GM12878 (cell line): ENCODE measurements at regions of chr4 and their contacts with region 1.

Region 1: GRCh38 chr4:176377780-176378179 is 58.0 kb downstream of the SPCS3 start:
- DNase-seq: no peak
- ATAC-seq: peak; percentile 86
- H3K4me3 ChIP-seq: no peak overlapping the region
- H3K27ac ChIP-seq: no peak overlapping the region
- H3K4me1 ChIP-seq: no peaks in the 10 kb centered on the region
- H3K27me3 ChIP-seq: no peaks in the 10 kb centered on the region
- CTCF ChIP-seq: peak; percentile 38 to 69 (median 61); a peak in 5 of 6 replicates
- EP300 ChIP-seq: no peak
- POLR2A ChIP-seq: no peak
- RAD21 ChIP-seq: peak; percentile 87

Region 2: GRCh38 chr4:176259330-176260090 is 118.3 kb before region 1 on chr4:
- CTCF ChIA-PET with region 1: no interaction called
- POLR2A ChIA-PET with region 1: no interaction called
- RAD21 ChIA-PET with region 1: no interaction called
- SMC1A ChIA-PET with region 1: no interaction called
- in situ Hi-C with region 1: no loop called
- intact Hi-C with region 1: no loop called
- DNase-seq: no peak
- ATAC-seq: peak; percentile 51
- H3K4me3 ChIP-seq: no peak overlapping the region
- H3K27ac ChIP-seq: no peak overlapping the region
- H3K4me1 ChIP-seq: no peaks in the 10 kb centered on the region
- H3K27me3 ChIP-seq: no peaks in the 10 kb centered on the region
- CTCF ChIP-seq: no peak
- EP300 ChIP-seq: no peak
- POLR2A ChIP-seq: no peak
- RAD21 ChIP-seq: no peak

Region 3: GRCh38 chr4:176413171-176413570 is 35.4 kb after region 1 on chr4:
- CTCF ChIA-PET with region 1: interaction called, 8 read pairs
- POLR2A ChIA-PET with region 1: no interaction called
- RAD21 ChIA-PET with region 1: interaction called, 11 read pairs
- SMC1A ChIA-PET with region 1: interaction called, 18 read pairs
- in situ Hi-C with region 1: no loop called
- intact Hi-C with region 1: no loop called
- DNase-seq: peak; percentile 88
- ATAC-seq: peak; percentile 65
- H3K4me3 ChIP-seq: no peak overlapping the region
- H3K27ac ChIP-seq: peak overlapping the region; percentile 78
- H3K4me1 ChIP-seq: peaks cover 15% of the 10 kb centered on the region
- H3K27me3 ChIP-seq: no peaks in the 10 kb centered on the region
- CTCF ChIP-seq: no peak
- EP300 ChIP-seq: no peak
- POLR2A ChIP-seq: no peak
- RAD21 ChIP-seq: 0 out of 2 replicates have a peak, but pooled peaks have one; percentile 16

Region 4: GRCh38 chr4:176642472-176642871 is 264.7 kb after region 1 on chr4:
- CTCF ChIA-PET with region 1: interaction called, 4 read pairs
- POLR2A ChIA-PET with region 1: no interaction called
- RAD21 ChIA-PET with region 1: interaction called, 6 read pairs
- SMC1A ChIA-PET with region 1: interaction called, 3 read pairs
- in situ Hi-C with region 1: loop called (anchors 10 kb)
- intact Hi-C with region 1: loop called (anchors 2 kb)
- DNase-seq: no peak
- ATAC-seq: peak; percentile 74
- H3K4me3 ChIP-seq: no peak overlapping the region
- H3K27ac ChIP-seq: no peak overlapping the region
- H3K4me1 ChIP-seq: no peaks in the 10 kb centered on the region
- H3K27me3 ChIP-seq: no peaks in the 10 kb centered on the region
- CTCF ChIP-seq: peak; percentile 11 to 20 (median 15); a peak in 2 of 6 replicates
- EP300 ChIP-seq: no peak
- POLR2A ChIP-seq: no peak
- RAD21 ChIP-seq: peak; percentile 43

Region 5: DNA sequence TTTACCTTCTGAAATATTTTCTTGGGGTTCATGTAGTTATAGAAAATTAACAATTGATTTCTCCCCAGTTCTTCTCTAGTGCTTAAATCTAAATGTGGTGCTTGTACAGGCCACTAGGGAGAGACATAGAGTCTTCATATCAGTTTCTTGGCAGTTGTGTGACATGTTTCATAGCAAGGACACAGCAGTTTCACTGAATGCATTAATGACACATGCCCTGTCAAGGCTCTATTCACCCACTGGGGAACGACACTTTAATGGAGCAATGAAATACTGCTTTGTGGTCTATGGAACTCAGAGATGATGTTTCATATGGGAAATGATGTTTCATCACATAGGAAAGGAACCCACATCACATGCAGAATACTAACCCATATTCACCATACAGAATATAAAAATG is 412.2 kb after region 1 on chr4:
- CTCF ChIA-PET with region 1: interaction called, 4 read pairs
- POLR2A ChIA-PET with region 1: no interaction called
- RAD21 ChIA-PET with region 1: no interaction called
- SMC1A ChIA-PET with region 1: no interaction called
- in situ Hi-C with region 1: no loop called
- intact Hi-C with region 1: loop called (anchors 1 kb)
- DNase-seq: no peak
- ATAC-seq: peak; percentile 83
- H3K4me3 ChIP-seq: no peak overlapping the region
- H3K27ac ChIP-seq: no peak overlapping the region
- H3K4me1 ChIP-seq: no peaks in the 10 kb centered on the region
- H3K27me3 ChIP-seq: peaks cover 3 to 13% of the 10 kb centered on the region in 2 experiments; a peak in 3 of 4 replicates
- CTCF ChIP-seq: peak; percentile 56 to 65 (median 63)
- EP300 ChIP-seq: no peak
- POLR2A ChIP-seq: no peak
- RAD21 ChIP-seq: peak; percentile 57